Kidney (tissue), 22 donors: ENCODE measurements at regions of chr4 and their contacts with region 1.

Region 1: GRCh38 chr4:183840311-183840710 is 64.8 kb upstream of the STOX2 start:
- DNase-seq: peak in 4 of 5 donors; percentile 86 to 93 (median 89)
- H3K4me3 ChIP-seq: no peak overlapping the region
- H3K27ac ChIP-seq: no peak overlapping the region
- H3K4me1 ChIP-seq: no peaks in the 10 kb centered on the region
- H3K27me3 ChIP-seq: no peaks in the 10 kb centered on the region
- CTCF ChIP-seq: peak; percentile 89

Region 2: DNA sequence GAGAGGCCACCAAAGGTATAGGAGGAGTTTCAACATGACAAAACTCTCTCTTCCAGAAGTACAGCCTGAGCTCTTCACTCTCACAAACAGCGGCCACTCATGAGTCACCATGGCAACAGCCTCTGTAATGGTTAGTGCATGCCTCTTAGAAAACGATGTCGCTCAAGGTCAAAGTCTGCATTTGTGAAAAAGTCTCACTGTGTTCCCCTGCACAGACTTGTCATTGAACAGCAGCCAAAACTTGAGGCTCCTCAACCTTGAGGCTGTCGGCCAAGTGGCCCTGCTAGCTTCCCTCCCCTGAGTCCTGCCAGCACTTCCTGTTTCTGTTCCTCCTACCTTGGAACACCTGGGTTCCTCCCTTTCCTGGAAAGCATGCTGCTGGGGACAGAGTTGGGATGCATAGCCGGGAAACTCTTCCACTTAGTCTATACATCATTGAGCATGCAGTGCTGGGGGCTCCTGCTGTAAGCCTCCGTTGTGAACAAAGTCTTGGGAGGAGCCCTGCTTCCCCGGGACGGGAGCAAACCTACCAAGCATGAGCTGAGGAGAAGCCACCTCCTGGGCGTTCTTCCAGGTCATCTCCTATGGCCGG is 268.9 kb before region 1 on chr4:
- intact Hi-C with region 1: no loop called
- DNase-seq: peak in 3 of 5 donors; percentile 58 to 81 (median 74)
- H3K4me3 ChIP-seq: peak overlapping the region; percentile 1 to 43 (median 23)
- H3K27ac ChIP-seq: no peak overlapping the region
- H3K4me1 ChIP-seq: peaks cover 0 to 2% (median 0%) of the 10 kb centered on the region in 3 donors
- H3K27me3 ChIP-seq: no peaks in the 10 kb centered on the region
- CTCF ChIP-seq: no peak

Region 3: GRCh38 chr4:184168406-184169019 is 328.2 kb after region 1 on chr4:
- intact Hi-C with region 1: loop called (anchors 5 kb)
- DNase-seq: peak; percentile 81 to 89 (median 83)
- H3K4me3 ChIP-seq: peak overlapping the region in 1 of 3 donors; percentile 44
- H3K27ac ChIP-seq: peak overlapping the region in 1 of 2 donors; percentile 45
- H3K4me1 ChIP-seq: peaks cover 0 to 4% (median 0%) of the 10 kb centered on the region in 3 donors
- H3K27me3 ChIP-seq: no peaks in the 10 kb centered on the region
- CTCF ChIP-seq: peak; percentile 95